ENCODE measurements at regions of chr6 and their contacts with region 1.

Region 1: DNA sequence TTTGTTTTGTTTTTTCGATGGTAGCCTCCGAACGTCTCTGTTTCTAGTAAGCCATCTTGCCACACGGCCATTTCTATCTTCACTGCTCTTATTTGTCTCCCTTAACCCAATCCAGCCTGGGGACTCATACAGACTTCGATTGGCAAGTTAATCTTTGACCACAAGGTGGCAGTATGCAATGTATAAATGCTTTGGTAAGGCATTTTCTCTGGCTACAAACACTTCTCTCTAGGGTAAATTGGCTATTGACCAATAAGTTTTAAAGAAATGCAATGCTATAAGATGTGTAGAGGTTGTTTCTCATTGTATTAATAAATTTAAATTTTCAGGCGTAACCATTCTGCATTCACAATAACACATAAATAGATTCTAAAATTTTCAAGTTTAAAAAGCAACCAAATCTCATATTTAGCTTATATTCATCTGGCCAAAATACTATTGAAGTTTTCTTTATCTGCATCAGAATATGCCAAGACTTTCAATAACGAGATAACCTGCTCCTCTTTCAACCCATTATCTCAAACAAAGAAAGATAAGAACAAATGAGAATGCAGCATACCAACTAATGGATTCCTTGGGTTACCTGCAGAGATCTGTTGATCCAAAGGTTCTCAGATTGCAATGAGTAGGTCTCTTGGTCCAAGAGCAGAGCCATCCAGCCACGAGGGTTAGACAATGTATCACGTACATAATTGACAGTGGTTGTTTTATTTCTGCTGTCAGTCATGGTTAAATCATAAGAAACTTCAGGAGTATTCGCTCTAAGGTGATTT is 231.9 kb downstream of the PKHD1 start:
- H3K4me3 Mint-ChIP-seq: no peak overlapping the region
- H3K27ac Mint-ChIP-seq: no peak overlapping the region
- H3K4me1 Mint-ChIP-seq: no peaks in the 10 kb centered on the region
- H3K27me3 Mint-ChIP-seq: peaks cover 1% of the 10 kb centered on the region

Region 2: GRCh38 chr6:51562198-51562597 is 293.3 kb before region 1 on chr6:
- intact Hi-C with region 1: no loop called
- H3K4me3 Mint-ChIP-seq: no peak overlapping the region
- H3K27ac Mint-ChIP-seq: no peak overlapping the region
- H3K4me1 Mint-ChIP-seq: no peaks in the 10 kb centered on the region
- H3K27me3 Mint-ChIP-seq: no peaks in the 10 kb centered on the region

Region 3: GRCh38 chr6:51959744-51960383 is 104.4 kb after region 1 on chr6:
- intact Hi-C with region 1: loop called (anchors 5 kb)
- H3K4me3 Mint-ChIP-seq: no peak overlapping the region
- H3K27ac Mint-ChIP-seq: no peak overlapping the region
- H3K4me1 Mint-ChIP-seq: no peaks in the 10 kb centered on the region
- H3K27me3 Mint-ChIP-seq: peaks cover 1% of the 10 kb centered on the region

Region 4: GRCh38 chr6:52020945-52021570 is 165.6 kb after region 1 on chr6:
- intact Hi-C with region 1: loop called (anchors 1 kb)
- H3K4me3 Mint-ChIP-seq: no peak overlapping the region
- H3K27ac Mint-ChIP-seq: no peak overlapping the region
- H3K4me1 Mint-ChIP-seq: no peaks in the 10 kb centered on the region
- H3K27me3 Mint-ChIP-seq: no peaks in the 10 kb centered on the region

Measured in dendritic cell treated with granulocyte-macrophage colony-stimulating factor and Interleukin-4, amounts not matched to agents 40 ng/mL and 50 ng/mL, for 4 days (primary cell).